ENCODE measurements at regions of chr4 and their contacts with region 1.

Region 1: GRCh38 chr4:168656055-168656660 is 159.3 kb downstream of the PALLD start:
- DNase-seq: no peak
- ATAC-seq: no peak
- H3K4me3 ChIP-seq: no peak overlapping the region
- H3K27ac ChIP-seq: no peak overlapping the region
- H3K4me1 ChIP-seq: peaks cover 2 to 4% of the 10 kb centered on the region in 2 donors
- H3K27me3 ChIP-seq: no peaks in the 10 kb centered on the region

Region 2: DNA sequence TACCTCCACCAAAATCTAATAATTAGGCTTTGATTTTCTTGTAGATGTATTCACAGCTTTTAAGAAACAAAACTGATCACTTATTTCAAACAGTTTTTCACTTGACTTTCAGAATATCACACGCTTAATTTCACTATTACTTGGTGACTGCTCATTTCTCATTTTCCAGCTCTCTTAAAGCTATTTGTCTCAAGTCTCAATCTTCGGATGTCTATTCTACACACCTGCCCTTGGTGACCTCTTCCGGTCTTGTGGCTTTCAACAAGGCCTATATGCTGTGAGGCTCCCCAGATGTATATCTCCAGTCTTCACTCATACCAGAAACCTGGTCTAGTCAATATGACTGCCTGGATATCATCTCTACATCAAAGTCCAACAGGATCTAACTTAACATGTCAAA is 598.7 kb before region 1 on chr4:
- intact Hi-C with region 1: no loop called
- DNase-seq: no peak
- ATAC-seq: no peak
- H3K4me3 ChIP-seq: no peak overlapping the region
- H3K27ac ChIP-seq: no peak overlapping the region
- H3K4me1 ChIP-seq: no peaks in the 10 kb centered on the region
- H3K27me3 ChIP-seq: no peaks in the 10 kb centered on the region

Region 3: GRCh38 chr4:168618577-168619265 is 37.4 kb before region 1 on chr4:
- intact Hi-C with region 1: loop called in 1 of 2 experiments (anchors 5 kb)
- DNase-seq: peak in 1 of 2 donors; percentile 59
- ATAC-seq: no peak
- H3K4me3 ChIP-seq: no peak overlapping the region
- H3K27ac ChIP-seq: peak overlapping the region in 1 of 2 donors; percentile 91
- H3K4me1 ChIP-seq: peaks cover 5 to 20% of the 10 kb centered on the region in 2 donors
- H3K27me3 ChIP-seq: no peaks in the 10 kb centered on the region